IMR-90 (cell line): ENCODE measurements at regions of chr7 and their contacts with region 1.

Region 1: GRCh38 chr7:24381894-24382505 is 98.0 kb downstream of the NPY start:
- DNase-seq: no peak
- ATAC-seq: no peak; the same call in 1 of the 2 replicates
- H3K4me3 ChIP-seq: no peak overlapping the region
- H3K27ac ChIP-seq: no peak overlapping the region
- H3K4me1 ChIP-seq: no peaks in the 10 kb centered on the region
- H3K27me3 ChIP-seq: no peaks in the 10 kb centered on the region
- CTCF ChIP-seq: 0 out of 2 replicates have a peak, but pooled peaks have one; percentile 15
- POLR2A ChIP-seq: no peak
- RAD21 ChIP-seq: no peak

Region 2: GRCh38 chr7:23938937-23939552 is 443.0 kb before region 1 on chr7:
- CTCF ChIA-PET with region 1: interaction called, 5 read pairs
- POLR2A ChIA-PET with region 1: no interaction called
- dilution Hi-C with region 1: no loop called
- in situ Hi-C with region 1: no loop called
- intact Hi-C with region 1: loop called (anchors 10 kb)
- DNase-seq: peak; percentile 11
- ATAC-seq: peak; percentile 85
- H3K4me3 ChIP-seq: no peak overlapping the region
- H3K27ac ChIP-seq: no peak overlapping the region
- H3K4me1 ChIP-seq: no peaks in the 10 kb centered on the region
- H3K27me3 ChIP-seq: no peaks in the 10 kb centered on the region
- CTCF ChIP-seq: peak; percentile 30; the same call in 1 of the 2 replicates
- POLR2A ChIP-seq: no peak
- RAD21 ChIP-seq: peak; percentile 37

Region 3: GRCh38 chr7:24401628-24402593 is 19.9 kb after region 1 on chr7:
- CTCF ChIA-PET with region 1: no interaction called
- POLR2A ChIA-PET with region 1: no interaction called
- dilution Hi-C with region 1: no loop called
- in situ Hi-C with region 1: no loop called
- intact Hi-C with region 1: no loop called
- DNase-seq: peak; percentile 40
- ATAC-seq: peak; percentile 63; the same call in 1 of the 2 replicates
- H3K4me3 ChIP-seq: peak overlapping the region; percentile 45
- H3K27ac ChIP-seq: no peak overlapping the region
- H3K4me1 ChIP-seq: no peaks in the 10 kb centered on the region
- H3K27me3 ChIP-seq: peaks cover 3% of the 10 kb centered on the region
- CTCF ChIP-seq: peak; percentile 53
- POLR2A ChIP-seq: no peak
- RAD21 ChIP-seq: peak; percentile 56

Region 4: DNA sequence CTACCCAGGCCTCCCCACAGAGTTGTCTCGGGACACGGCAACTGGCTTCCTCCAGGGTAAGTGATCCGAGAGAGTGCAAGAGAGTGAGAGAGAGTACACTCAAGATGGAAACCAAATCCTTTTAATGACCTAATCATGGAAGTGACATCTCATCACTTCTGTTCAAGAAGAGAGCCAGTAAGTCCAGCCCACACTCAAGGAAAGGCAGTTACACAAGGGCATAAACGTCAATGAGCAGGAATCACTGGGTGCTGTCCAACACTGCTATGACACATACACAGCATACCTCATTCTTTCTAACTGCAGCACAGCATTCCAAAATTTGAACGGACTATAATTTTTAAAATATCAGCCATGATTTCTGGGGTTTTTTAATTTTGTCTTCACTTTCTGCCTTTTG is 627.3 kb after region 1 on chr7:
- CTCF ChIA-PET with region 1: no interaction called
- POLR2A ChIA-PET with region 1: no interaction called
- dilution Hi-C with region 1: no loop called
- in situ Hi-C with region 1: no loop called
- intact Hi-C with region 1: no loop called
- DNase-seq: peak; percentile 98
- ATAC-seq: peak; percentile 98
- H3K4me3 ChIP-seq: no peak overlapping the region
- H3K27ac ChIP-seq: peak overlapping the region; percentile 60
- H3K4me1 ChIP-seq: peaks cover 4% of the 10 kb centered on the region; the same call in 1 of the 2 replicates
- H3K27me3 ChIP-seq: no peaks in the 10 kb centered on the region
- CTCF ChIP-seq: no peak
- POLR2A ChIP-seq: no peak
- RAD21 ChIP-seq: no peak